ENCODE measurements at regions of chr6 and their contacts with region 1.

Region 1: DNA sequence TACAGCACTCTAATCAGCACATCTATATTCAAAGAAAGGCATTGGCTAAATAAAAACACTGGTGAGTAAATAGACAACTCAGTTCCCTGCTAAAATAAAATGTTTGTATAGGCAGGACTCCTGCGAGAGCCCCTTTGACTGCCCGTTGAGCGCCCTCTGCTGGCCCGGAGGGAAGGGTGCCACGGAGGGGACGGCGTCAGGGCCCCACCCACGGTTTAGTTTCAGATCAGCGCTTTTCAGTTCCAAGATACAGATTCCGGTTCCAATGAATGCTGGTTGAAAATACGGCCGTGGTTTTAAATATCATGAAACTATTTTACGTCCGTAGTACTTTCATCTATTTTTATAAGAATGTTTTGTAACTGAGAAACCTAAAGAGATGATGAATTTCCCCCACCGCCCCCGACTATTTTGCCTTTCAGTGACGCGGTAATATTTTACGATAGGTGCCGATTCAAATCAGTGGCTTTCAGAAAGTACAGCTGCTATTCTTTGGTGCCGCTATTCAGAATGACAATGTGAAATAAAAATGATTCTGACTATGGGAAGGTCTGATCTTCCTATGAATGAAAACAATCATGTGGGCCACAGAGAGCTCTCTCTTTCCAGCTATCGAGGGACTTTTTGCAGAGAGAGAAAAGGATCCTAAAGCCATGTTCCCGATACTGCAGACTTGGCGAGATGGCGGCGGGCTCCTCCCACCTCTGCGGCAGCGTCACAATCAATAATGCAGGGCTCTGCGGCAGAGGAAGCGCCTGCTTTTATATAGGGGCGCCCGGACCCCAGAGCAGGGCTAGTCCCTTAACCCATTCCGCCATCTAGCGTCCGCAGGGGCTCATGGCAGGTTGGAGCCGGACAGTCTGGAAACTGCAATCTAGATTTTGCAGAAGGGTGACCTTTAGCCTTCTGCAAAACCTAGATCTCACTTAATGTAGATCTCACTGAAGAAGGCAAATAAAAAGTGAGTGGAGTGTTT is 10.6 kb upstream of the CCN6 start:
- DNase-seq: peak; percentile 97
- H3K4me3 ChIP-seq: peak overlapping the region; percentile 48 to 76 (median 56)
- H3K27ac ChIP-seq: peak overlapping the region; percentile 73 to 92 (median 88)
- H3K4me1 ChIP-seq: peaks cover 0 to 13% (median 3%) of the 10 kb centered on the region in 6 donors
- H3K27me3 ChIP-seq: no peaks in the 10 kb centered on the region
- CTCF ChIP-seq: peak; percentile 88 to 99 (median 95)
- POLR2A ChIP-seq: peak in 1 of 3 donors; percentile 66

Region 2: DNA sequence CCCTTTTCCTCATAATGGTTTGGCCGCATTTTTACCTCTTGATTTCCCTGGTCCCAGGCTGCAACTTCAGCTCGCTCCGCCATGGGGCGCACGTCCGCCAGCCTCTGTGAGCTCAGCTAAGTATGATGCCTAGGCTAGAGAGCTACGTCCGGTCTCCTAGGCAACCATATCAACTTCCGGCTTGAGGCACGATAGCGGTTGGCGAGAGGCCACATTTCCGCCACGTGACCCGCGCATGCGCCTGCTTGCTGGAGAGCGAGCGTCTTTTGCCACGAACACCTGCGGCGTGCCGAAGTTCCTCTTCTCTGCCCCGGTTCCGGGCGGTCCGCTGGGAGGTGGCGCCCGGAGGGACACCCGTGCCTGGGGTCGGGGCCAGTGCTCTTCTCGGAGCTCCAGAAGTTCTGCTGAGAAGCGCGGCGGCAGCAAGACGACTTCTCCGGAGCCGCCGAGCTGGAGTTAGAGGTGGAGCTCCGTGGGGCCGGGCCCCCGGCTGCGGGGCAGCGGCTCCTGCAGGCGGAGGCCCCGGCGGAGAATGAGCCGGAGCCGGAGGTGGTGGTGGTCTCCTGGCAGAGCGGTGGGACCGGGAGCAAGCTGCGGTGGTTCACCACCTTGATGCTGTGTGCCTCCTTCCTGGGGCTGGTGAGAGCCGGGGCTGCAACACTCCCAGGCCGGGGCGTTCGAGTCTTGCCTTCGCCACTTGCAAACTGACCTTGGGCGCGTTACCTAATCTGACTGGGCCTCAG is 784.1 kb before region 1 on chr6:
- intact Hi-C with region 1: loop called (anchors 10 kb)
- DNase-seq: peak; percentile 100
- H3K4me3 ChIP-seq: peak overlapping the region; percentile 64 to 89 (median 75)
- H3K27ac ChIP-seq: peak overlapping the region; percentile 76 to 95 (median 92)
- H3K4me1 ChIP-seq: peaks cover 6 to 47% (median 29%) of the 10 kb centered on the region in 6 donors
- H3K27me3 ChIP-seq: peaks cover 0 to 13% (median 0%) of the 10 kb centered on the region in 7 donors
- CTCF ChIP-seq: peak; percentile 89 to 100 (median 98)
- POLR2A ChIP-seq: peak in 1 of 3 donors; percentile 68

Region 3: GRCh38 chr6:112007805-112008204 is 35.5 kb before region 1 on chr6:
- intact Hi-C with region 1: no loop called
- DNase-seq: no peak
- H3K4me3 ChIP-seq: no peak overlapping the region
- H3K27ac ChIP-seq: no peak overlapping the region
- H3K4me1 ChIP-seq: peaks cover 0 to 5% (median 0%) of the 10 kb centered on the region in 6 donors
- H3K27me3 ChIP-seq: no peaks in the 10 kb centered on the region
- CTCF ChIP-seq: no peak
- POLR2A ChIP-seq: no peak

Region 4: DNA sequence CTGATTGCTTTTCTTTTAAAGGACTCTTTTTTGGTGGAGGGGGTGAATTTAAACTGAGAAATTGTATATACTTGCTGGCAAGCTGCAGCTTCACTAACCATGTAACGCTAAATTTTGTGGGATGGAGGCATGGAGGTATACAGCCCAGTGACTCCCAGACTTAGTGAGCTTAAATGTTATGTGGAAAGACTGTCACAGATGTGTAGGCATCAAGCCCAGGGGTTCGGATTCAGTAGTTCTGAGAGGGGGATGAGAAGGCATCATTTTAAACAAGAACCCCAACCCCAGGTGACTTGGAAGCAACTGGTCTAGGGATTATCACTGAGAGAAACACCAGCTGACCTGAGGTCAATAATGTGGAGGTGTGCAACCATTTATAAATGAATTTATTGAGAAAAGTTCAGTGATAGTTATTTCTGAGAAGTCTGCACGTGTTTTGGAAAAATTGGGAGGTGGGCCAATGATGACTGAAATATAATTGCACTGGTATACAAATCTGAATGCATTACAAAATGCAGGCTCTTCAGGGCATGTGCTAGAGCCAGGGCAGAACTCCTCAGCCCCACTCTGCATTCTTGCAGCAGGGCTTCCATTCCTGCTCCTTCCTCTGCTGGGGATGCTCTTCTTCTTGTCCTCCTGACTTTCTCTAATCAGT is 330.7 kb after region 1 on chr6:
- intact Hi-C with region 1: no loop called
- DNase-seq: no peak
- H3K4me3 ChIP-seq: no peak overlapping the region
- H3K27ac ChIP-seq: no peak overlapping the region
- H3K4me1 ChIP-seq: no peaks in the 10 kb centered on the region
- H3K27me3 ChIP-seq: peaks cover 0 to 18% (median 0%) of the 10 kb centered on the region in 7 donors
- CTCF ChIP-seq: no peak
- POLR2A ChIP-seq: no peak

Region 5: DNA sequence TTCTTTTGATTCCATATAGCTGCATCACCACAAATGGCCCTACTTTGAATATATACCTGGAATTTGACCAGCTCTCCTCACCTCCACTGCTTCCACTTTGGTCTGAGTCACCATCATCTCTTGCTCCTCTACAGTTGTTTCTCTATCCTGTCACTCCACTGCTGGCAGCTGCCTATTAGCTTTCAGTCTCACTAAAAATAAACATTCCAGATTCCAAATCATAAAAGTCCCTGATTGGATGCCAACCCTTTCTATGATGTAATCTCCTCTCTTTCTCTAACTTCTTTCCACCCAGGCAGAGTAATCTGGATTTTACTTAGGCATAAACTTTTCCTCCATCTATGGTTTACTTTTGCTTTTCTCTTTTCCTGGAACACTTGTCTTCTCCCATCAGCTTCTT is 352.9 kb after region 1 on chr6:
- intact Hi-C with region 1: no loop called
- DNase-seq: no peak
- H3K4me3 ChIP-seq: no peak overlapping the region
- H3K27ac ChIP-seq: no peak overlapping the region
- H3K4me1 ChIP-seq: no peaks in the 10 kb centered on the region
- H3K27me3 ChIP-seq: no peaks in the 10 kb centered on the region
- CTCF ChIP-seq: no peak
- POLR2A ChIP-seq: no peak

Region 6: DNA sequence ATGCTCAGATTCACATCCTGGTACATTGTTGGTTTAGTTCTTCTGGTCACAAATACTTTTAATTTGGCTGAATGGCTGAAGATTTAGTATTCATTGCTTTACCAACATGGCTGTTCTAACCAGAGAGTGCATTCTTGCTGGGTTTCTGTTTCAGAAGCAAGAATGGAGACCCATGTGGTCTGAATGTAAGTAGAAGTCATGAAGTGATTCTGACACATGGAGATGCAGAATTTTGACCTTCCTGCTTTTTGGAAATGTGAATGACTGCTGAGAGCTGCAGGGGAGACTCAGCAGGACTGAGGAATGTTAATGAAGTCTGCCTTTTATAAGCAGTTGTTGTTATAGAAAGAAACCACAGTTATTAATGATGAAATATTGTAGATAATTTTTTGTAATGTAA is 1237.7 kb after region 1 on chr6:
- intact Hi-C with region 1: no loop called
- DNase-seq: no peak
- H3K4me3 ChIP-seq: no peak overlapping the region
- H3K27ac ChIP-seq: no peak overlapping the region
- H3K4me1 ChIP-seq: no peaks in the 10 kb centered on the region
- H3K27me3 ChIP-seq: no peaks in the 10 kb centered on the region
- CTCF ChIP-seq: no peak
- POLR2A ChIP-seq: no peak

Measured in spleen (tissue), 13 donors.